HepG2 (cell line): ENCODE measurements at regions of chr17 and their contacts with region 1.

Region 1: DNA sequence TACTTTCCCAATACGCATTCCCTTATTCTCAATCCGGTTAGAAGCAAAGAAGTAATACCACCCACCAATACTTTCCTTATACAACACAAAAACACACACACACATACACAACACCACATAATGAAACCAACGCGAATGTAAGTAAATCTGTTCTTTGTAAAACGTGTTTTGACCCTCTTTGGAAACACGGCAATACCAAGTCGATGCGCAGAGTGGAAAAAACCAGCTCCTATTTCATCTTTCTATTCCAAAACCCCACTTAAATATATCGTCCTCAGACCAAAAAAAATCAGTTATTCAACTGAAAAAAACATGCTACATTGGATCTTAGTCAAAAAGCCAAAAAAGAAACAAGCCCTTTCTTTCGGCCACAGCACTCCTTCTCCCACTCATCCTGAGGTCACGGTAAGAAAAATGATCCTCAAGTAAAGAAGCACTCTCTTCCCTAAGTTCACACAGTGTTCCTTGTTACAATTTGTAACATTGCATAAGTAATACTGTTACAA is 31.0 kb upstream of the ARL4D start:
- DNase-seq: peak; percentile 91
- ATAC-seq: peak; percentile 37
- H3K4me3 ChIP-seq: peak overlapping the region; percentile 43 to 73 (median 58); a peak in 4 of 6 replicates
- H3K27ac ChIP-seq: peak overlapping the region; percentile 95
- H3K4me1 ChIP-seq: peaks cover 73% of the 10 kb centered on the region
- H3K27me3 ChIP-seq: no peaks in the 10 kb centered on the region; a peak in 1 of 5 replicates
- CTCF ChIP-seq: no peak
- EP300 ChIP-seq: peak in 1 of 2 experiments; percentile 65; a peak in 2 of 4 replicates
- POLR2A ChIP-seq: peak; percentile 98 to 100
- RAD21 ChIP-seq: peak; percentile 59; the same call in 1 of the 2 replicates

Region 2: DNA sequence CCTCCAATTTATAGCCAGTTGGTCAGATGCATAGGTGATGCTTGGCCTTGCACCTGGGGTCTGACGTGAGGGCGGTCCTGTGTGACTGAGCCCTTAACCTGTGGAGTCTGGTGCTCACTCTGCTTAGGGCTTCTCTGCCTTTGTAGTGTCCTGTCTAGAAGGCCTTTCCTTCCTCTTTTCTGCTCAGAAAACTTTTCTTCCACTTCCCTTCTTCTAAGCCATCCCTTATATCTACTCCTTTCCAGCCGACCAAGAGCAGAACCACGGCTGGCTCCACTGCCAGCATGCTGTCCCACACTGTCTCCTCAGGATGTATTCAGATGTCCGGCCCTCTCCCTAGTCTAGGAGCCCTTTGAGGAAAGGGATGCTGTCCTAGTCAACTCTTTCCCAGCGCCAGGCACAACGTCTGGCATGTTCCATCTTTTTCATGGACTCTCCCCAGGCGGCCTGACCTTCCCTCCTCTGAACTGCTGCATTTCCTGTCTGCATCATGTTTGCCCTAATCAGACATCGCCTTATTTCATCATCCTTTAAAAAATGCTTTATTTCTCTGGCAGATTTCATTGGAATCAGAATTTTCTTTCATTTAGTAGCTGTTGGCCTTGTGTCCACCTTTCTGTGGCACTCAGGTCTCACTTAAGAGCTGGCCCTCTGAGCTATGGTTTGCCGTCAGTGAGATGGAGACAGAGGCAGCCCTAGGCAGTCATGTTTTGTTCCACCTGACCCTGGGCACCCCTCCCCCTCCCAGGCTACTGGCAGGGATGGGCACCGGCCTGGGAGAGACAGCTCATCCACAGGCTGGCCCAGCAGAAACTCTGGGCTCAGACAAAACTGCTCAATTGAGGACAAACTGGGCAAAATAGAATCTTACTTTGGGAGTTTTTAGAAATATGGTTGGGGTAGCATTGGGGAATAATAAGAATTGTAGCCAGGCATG is 227.1 kb before region 1 on chr17:
- CTCF ChIA-PET with region 1: no interaction called
- POLR2A ChIA-PET with region 1: no interaction called
- in situ Hi-C with region 1: no loop called
- intact Hi-C with region 1: no loop called
- DNase-seq: no peak
- ATAC-seq: peak; percentile 26; the same call in 1 of the 3 replicates
- H3K4me3 ChIP-seq: no peak overlapping the region
- H3K27ac ChIP-seq: no peak overlapping the region
- H3K4me1 ChIP-seq: peaks cover 3% of the 10 kb centered on the region
- H3K27me3 ChIP-seq: no peaks in the 10 kb centered on the region
- CTCF ChIP-seq: no peak
- EP300 ChIP-seq: no peak
- POLR2A ChIP-seq: peak in 1 of 2 experiments; percentile 16; a peak in 1 of 4 replicates
- RAD21 ChIP-seq: no peak

Region 3: DNA sequence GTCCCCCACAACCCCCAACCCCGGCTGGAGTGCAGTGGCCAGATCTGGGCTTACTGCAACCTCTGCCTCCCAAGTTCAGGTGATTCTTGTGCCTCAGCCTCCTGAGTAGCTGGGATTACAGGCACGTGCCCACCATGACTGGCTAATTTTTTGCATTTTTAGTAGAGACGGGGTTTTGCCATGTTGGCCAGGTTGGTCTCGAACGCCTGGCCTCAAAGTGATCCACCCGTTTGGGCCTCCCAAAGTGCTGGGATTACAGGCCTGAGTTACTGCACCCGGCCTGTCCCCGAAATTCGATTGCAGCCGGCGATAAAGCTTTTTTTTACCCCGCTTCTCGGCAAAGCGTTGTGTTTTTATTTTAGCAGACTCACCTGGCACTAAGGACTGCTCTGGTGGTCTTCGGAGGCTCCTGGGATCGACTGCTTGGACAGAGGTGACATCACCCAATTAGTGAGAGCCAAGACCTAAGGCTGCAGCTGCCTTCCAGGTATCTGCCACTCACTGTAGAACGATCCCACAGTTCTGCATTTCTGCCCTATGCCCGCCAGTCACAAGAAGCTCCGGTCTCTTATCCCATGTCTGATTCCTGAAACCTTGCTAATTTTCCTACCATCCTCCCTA is 51.2 kb before region 1 on chr17:
- CTCF ChIA-PET with region 1: no interaction called
- POLR2A ChIA-PET with region 1: interaction called, 35 read pairs
- in situ Hi-C with region 1: no loop called
- intact Hi-C with region 1: no loop called
- DNase-seq: no peak
- ATAC-seq: no peak
- H3K4me3 ChIP-seq: no peak overlapping the region; a peak in 1 of 6 replicates
- H3K27ac ChIP-seq: no peak overlapping the region
- H3K4me1 ChIP-seq: peaks cover 20% of the 10 kb centered on the region
- H3K27me3 ChIP-seq: 0 out of 5 replicates have a peak, but pooled peaks cover 0 to 2% of the 10 kb centered on the region in 2 experiments
- CTCF ChIP-seq: no peak
- EP300 ChIP-seq: no peak
- POLR2A ChIP-seq: no peak
- RAD21 ChIP-seq: no peak

Region 4: GRCh38 chr17:43393944-43394482 is 26.2 kb after region 1 on chr17:
- CTCF ChIA-PET with region 1: interaction called, 14 read pairs
- POLR2A ChIA-PET with region 1: interaction called, 386 read pairs
- in situ Hi-C with region 1: no loop called
- intact Hi-C with region 1: loop called (anchors 1 kb)
- DNase-seq: peak; percentile 83
- ATAC-seq: peak; percentile 60
- H3K4me3 ChIP-seq: no peak overlapping the region
- H3K27ac ChIP-seq: peak overlapping the region; percentile 55
- H3K4me1 ChIP-seq: peaks cover 64% of the 10 kb centered on the region
- H3K27me3 ChIP-seq: no peaks in the 10 kb centered on the region
- CTCF ChIP-seq: peak; percentile 96
- EP300 ChIP-seq: 0 out of 4 replicates have a peak, but pooled peaks of 1 of the 2 experiments have one; percentile 11
- POLR2A ChIP-seq: no peak
- RAD21 ChIP-seq: peak; percentile 99

Region 5: DNA sequence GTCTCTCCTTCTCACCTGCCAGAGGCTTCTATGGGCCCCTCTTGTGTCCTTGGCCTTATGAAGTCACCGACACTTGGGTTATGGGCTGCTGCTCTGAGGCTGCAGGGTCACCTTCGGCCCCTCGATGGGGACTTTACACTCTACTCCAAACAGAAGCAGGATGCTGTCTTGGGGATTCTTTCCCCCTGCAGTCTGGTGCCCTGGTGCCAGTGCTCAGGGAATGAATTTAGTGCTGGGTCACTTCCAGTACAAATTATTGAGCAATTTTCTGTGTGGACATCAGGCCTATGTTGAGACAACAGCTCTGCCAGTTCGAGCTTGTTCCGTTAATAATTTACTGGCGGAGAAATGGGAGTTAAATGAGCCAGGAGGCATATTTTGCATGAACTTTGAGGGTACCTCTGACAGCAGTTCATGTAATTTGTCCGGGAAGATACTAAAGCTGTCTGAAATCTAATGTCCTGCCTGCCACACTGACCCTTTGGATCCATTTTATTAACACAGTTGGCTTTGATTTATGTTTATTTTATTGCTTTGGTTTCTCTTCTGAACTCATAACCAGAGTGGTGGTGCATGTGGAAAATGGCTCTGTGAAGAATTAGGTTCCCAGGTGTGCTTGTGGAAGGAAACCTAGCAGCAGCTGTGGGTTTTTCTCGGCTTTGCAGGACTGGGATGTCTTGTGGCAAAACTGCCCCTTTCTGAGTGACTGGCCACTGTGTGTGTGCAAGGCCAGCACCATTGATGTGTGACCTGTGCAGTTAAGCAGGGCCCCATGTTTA is 81.9 kb after region 1 on chr17:
- CTCF ChIA-PET with region 1: no interaction called
- POLR2A ChIA-PET with region 1: interaction called, 22 read pairs
- in situ Hi-C with region 1: no loop called
- intact Hi-C with region 1: no loop called
- DNase-seq: peak; percentile 97
- ATAC-seq: peak; percentile 96
- H3K4me3 ChIP-seq: peak overlapping the region; percentile 15 to 52 (median 32); a peak in 5 of 6 replicates
- H3K27ac ChIP-seq: peak overlapping the region; percentile 89
- H3K4me1 ChIP-seq: peaks cover 52% of the 10 kb centered on the region
- H3K27me3 ChIP-seq: no peaks in the 10 kb centered on the region
- CTCF ChIP-seq: peak; percentile 1; the same call in 1 of the 2 replicates
- EP300 ChIP-seq: peak; percentile 82 to 91
- POLR2A ChIP-seq: no peak
- RAD21 ChIP-seq: no peak

Region 6: GRCh38 chr17:43483674-43484372 is 116.0 kb after region 1 on chr17 and contains the start of gene DHX8:
- CTCF ChIA-PET with region 1: interaction called, 11 read pairs
- POLR2A ChIA-PET with region 1: interaction called, 288 read pairs
- in situ Hi-C with region 1: no loop called
- intact Hi-C with region 1: loop called (anchors 1 kb)
- DNase-seq: peak; percentile 100
- ATAC-seq: peak; percentile 94
- H3K4me3 ChIP-seq: peak within 1 kb of the TSS; percentile 76 to 85 (median 78)
- H3K27ac ChIP-seq: peak within 1 kb of the TSS; percentile 73
- H3K4me1 ChIP-seq: peaks cover 75% of the 10 kb centered on the region
- H3K27me3 ChIP-seq: no peaks in the 10 kb centered on the region; a peak in 1 of 5 replicates
- CTCF ChIP-seq: peak; percentile 100
- EP300 ChIP-seq: peak; percentile 51 to 66
- POLR2A ChIP-seq: peak; percentile 83 to 92
- RAD21 ChIP-seq: peak; percentile 100
- total RNA-seq, gene DHX8: 48.9 and 66.9 TPM in 2 replicates

Region 7: GRCh38 chr17:43546319-43547188 is 178.8 kb after region 1 on chr17 and contains the start of gene ETV4:
- CTCF ChIA-PET with region 1: no interaction called
- POLR2A ChIA-PET with region 1: interaction called, 17 read pairs
- in situ Hi-C with region 1: no loop called
- intact Hi-C with region 1: no loop called
- DNase-seq: peak; percentile 96
- ATAC-seq: peak; percentile 68
- H3K4me3 ChIP-seq: peak within 1 kb of the TSS; percentile 84 to 89 (median 87)
- H3K27ac ChIP-seq: peak within 1 kb of the TSS; percentile 100
- H3K4me1 ChIP-seq: peaks cover 74% of the 10 kb centered on the region
- H3K27me3 ChIP-seq: peaks cover 0 to 7% of the 10 kb centered on the region in 2 experiments; a peak in 1 of 5 replicates
- CTCF ChIP-seq: no peak
- EP300 ChIP-seq: peak in 1 of 2 experiments; percentile 16; a peak in 1 of 4 replicates
- POLR2A ChIP-seq: peak; percentile 56 to 67; a peak in 2 of 4 replicates
- RAD21 ChIP-seq: no peak; the same call in 1 of the 2 replicates
- total RNA-seq, gene ETV4: 126 and 128 TPM in 2 replicates